Activated CD4-positive, alpha-beta T cell treated with anti-CD3 and anti-CD28 coated beads, Interleukin-2, amount 10 ng/mL, durations not matched to agents 7 days and 5 days (primary cell): ENCODE measurements at regions of chr6 and their contacts with region 1.

Region 1: GRCh38 chr6:163416557-163417253 is 2.2 kb downstream of the QKI start:
- DNase-seq: peak; percentile 55
- H3K4me3 Mint-ChIP-seq: peak overlapping the region; percentile 95
- H3K27ac Mint-ChIP-seq: peak overlapping the region; percentile 98
- H3K4me1 Mint-ChIP-seq: peaks cover 48% of the 10 kb centered on the region
- H3K27me3 Mint-ChIP-seq: no peaks in the 10 kb centered on the region

Region 2: DNA sequence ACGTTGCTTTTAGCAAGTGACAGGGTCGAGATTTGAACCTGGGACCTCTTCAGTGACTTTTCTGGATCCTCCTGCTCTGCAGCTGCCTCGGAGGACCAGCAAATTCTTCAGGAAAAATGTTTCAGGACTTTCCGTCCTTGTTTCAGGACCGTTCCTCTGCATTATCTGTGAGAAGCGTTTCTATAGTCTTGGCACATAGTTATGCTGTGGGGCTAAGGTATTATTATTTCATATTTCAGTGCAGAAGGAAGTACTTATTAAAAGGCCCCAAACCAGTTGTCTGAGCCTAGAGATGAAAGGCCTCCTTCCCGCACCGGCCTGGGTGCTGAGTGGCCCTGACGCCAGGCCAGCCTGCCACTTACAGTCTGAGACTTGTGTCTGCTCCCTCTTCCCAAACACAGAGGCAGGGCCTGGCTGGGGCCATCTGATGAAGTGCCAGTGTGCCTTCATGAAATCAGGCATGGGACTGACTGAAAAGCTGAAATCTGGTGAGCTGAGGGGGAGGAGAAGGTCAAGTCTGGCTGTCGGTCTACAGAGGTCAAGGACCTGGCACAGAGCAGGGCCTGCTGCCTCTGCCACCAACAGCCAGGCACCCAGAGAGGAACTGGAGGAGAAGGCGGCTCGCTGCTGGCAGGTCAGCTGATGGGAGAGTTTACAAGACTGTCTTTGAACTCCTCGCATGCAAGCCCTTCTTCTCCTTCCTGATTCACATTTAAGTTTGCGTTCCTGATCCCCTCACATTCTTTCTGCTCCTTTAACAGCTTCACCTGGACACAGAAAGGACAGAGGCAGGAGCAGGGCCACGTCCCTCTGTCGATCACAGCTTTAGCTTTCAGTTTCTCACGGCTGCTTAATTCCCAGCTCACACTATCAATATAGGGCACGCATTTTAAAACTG is 11.0 kb before region 1 on chr6:
- CTCF ChIA-PET with region 1: interaction called, 11 read pairs
- POLR2A ChIA-PET with region 1: no interaction called
- DNase-seq: peak; percentile 18
- H3K4me3 Mint-ChIP-seq: peak overlapping the region; percentile 73
- H3K27ac Mint-ChIP-seq: peak overlapping the region; percentile 92
- H3K4me1 Mint-ChIP-seq: peaks cover 16% of the 10 kb centered on the region
- H3K27me3 Mint-ChIP-seq: peaks cover 6% of the 10 kb centered on the region

Region 3: GRCh38 chr6:163437466-163437865 is 20.8 kb after region 1 on chr6:
- CTCF ChIA-PET with region 1: no interaction called
- POLR2A ChIA-PET with region 1: no interaction called
- DNase-seq: no peak
- H3K4me3 Mint-ChIP-seq: no peak overlapping the region
- H3K27ac Mint-ChIP-seq: no peak overlapping the region
- H3K4me1 Mint-ChIP-seq: peaks cover 35% of the 10 kb centered on the region
- H3K27me3 Mint-ChIP-seq: no peaks in the 10 kb centered on the region